ENCODE measurements at regions of chr5 and their contacts with region 1.

Region 1: DNA sequence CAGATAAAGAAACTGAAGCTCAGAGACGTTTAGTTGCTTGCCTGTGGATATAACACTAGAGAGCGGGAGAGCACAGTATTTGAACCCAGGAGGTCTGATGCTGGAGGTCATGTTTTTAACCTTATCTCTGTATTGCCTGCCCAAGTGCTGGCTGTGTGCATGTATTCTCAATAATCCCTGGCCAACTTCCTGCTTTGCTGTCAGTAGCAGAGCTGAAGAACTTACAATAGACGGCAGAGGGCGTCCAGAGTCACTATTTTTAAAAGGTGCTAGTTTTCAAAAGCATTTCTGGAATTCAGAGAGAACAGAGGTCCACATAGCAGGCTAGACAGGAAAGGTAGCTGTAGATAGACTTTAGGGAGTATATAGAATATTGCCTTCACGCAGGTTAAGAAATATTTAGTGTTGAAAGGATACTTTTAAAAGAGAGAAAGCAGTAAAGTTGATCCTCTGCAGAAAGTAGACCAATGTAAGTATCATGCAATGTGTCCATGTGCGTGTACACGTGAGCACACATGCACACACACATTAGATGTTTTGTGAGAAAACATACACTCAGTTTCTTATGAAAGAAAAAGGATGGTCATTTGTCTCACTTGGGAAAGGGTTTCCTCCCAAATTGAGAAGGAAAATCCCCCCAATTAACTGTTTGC is 46.3 kb downstream of the PTCD2 start:
- DNase-seq: peak; percentile 70 to 84 (median 82)
- H3K4me3 ChIP-seq: no peak overlapping the region
- H3K27ac ChIP-seq: no peak overlapping the region
- H3K4me1 ChIP-seq: peaks cover 0 to 17% (median 4%) of the 10 kb centered on the region in 4 experiments
- H3K27me3 ChIP-seq: no peaks in the 10 kb centered on the region

Region 2: DNA sequence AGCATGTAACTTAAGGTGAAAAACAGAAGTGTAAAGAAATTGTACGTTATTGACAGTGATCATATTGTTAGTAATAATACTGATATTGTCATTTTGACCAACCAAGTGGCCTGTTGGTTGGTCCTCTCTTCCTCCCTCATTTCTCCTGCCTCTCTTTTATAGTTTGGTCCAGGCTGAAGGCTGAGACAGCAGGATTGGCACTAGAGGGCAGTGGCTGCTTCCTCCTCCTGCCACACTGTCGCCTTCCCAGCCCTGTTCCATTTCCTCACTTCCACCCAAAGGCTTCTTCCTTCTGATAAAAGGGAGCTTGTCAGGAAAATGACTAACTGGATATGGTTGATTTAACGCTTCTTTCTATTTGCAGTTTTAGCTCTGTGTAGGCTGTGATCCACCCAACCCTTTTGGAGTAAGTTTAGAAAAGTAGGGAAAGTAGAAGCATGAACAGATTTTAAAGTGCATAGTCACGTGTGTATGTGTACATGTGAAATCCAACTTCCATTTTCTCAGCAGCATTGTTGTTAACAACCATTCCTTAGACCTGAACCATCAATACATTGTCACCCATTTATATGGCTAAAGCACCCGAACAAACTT is 10.6 kb before region 1 on chr5:
- CTCF ChIA-PET with region 1: interaction called, 22 read pairs
- POLR2A ChIA-PET with region 1: no interaction called
- DNase-seq: no peak
- H3K4me3 ChIP-seq: no peak overlapping the region
- H3K27ac ChIP-seq: no peak overlapping the region
- H3K4me1 ChIP-seq: peaks cover 0 to 9% (median 0%) of the 10 kb centered on the region in 4 experiments
- H3K27me3 ChIP-seq: no peaks in the 10 kb centered on the region

Region 3: DNA sequence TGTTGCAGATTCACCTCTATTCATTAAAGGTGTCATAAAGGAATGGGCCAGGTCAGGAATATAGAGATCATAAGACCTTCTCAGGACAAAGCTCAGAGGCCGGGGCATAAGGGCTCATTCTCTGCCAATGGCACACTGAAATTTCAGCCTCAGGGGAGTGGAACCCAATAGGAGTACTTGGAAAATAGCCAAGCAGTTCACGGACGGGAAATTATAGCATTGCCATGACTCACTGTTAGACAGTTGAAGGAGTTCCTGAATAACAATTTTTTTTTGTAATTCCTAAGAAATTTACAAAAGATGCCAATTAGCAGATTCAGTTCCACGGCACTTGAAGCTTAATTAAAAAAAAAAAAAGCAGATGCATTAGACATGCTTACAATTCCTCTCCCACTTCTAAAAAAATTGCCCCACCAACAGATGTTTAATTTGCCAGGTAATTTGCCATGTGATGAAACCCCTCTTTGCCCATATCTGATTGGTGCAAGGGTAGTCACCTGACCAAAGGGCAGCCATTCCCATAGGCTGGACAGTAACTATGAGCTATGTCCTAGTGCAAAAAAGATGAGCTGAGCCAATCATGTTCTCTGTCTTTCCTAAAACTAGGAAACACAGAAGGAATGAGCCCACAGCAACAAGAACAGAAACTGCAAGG is 12.3 kb after region 1 on chr5:
- CTCF ChIA-PET with region 1: interaction called, 23 read pairs
- POLR2A ChIA-PET with region 1: no interaction called
- DNase-seq: peak; percentile 54 to 85 (median 85)
- H3K4me3 ChIP-seq: no peak overlapping the region
- H3K27ac ChIP-seq: no peak overlapping the region
- H3K4me1 ChIP-seq: peaks cover 3 to 41% (median 20%) of the 10 kb centered on the region in 4 experiments
- H3K27me3 ChIP-seq: no peaks in the 10 kb centered on the region

Region 4: DNA sequence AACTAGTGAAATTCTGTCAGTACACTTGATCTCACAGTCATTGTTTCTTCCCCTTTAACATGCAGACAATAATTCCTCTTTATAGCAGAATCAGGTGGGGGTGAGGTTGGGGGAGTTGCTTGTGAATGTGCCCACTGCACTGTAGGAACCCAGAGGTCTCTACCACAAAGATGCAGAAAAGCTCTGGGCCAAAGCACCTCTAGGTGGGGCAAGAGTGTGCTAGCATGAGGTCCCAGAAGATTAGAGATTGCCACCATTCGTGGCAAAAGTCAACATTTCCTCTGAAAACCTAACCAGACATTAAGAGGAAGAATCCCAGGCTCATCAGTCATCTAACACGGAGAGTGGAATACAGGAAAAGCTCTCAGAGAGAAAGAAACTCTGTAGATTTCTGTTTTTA is 28.2 kb after region 1 on chr5:
- CTCF ChIA-PET with region 1: interaction called, 18 read pairs
- POLR2A ChIA-PET with region 1: no interaction called
- DNase-seq: peak; percentile 56 to 68 (median 68)
- H3K4me3 ChIP-seq: no peak overlapping the region
- H3K27ac ChIP-seq: no peak overlapping the region
- H3K4me1 ChIP-seq: peaks cover 0 to 22% (median 0%) of the 10 kb centered on the region in 4 experiments
- H3K27me3 ChIP-seq: no peaks in the 10 kb centered on the region

Region 5: DNA sequence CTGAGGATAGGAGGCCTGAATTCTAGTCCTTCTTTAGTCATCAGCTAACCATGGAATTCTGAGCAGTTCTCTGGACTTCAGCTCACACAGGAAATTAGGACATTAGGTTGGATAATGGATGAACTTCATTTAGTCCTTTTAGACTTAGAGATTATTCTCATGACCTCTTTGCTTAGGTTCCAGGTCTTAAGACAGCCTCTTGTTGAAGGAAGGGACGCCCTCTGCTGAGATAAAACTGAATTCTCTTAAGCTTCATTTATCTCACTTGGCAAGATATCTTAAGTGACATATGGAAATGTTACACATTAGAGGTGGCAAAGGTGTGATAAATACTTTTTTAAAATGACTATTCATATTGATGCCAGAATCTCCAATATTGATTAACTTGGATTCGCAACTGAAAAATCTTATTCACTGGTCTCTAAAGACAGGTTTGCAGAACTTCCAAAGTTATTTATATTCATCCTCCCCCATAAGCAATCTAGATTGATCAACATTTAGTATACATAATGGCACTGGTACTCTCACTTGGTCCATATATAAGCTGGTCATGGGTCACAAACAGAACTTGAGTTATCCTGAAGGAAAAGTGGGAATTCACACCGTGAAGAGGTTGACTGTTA is 157.6 kb after region 1 on chr5:
- CTCF ChIA-PET with region 1: interaction called, 87 read pairs
- POLR2A ChIA-PET with region 1: no interaction called
- DNase-seq: peak; percentile 81 to 87 (median 84)
- H3K4me3 ChIP-seq: no peak overlapping the region
- H3K27ac ChIP-seq: no peak overlapping the region
- H3K4me1 ChIP-seq: peaks cover 0 to 7% (median 0%) of the 10 kb centered on the region in 4 experiments
- H3K27me3 ChIP-seq: no peaks in the 10 kb centered on the region